Breast epithelium (tissue), 4 donors: ENCODE measurements at regions of chr6 and their contacts with region 1.

Region 1: GRCh38 chr6:97102145-97102790 is 177.7 kb downstream of the KLHL32 start:
- DNase-seq: no peak
- H3K4me3 ChIP-seq: no peak overlapping the region
- H3K27ac ChIP-seq: no peak overlapping the region
- H3K4me1 ChIP-seq: no peaks in the 10 kb centered on the region
- H3K27me3 ChIP-seq: no peaks in the 10 kb centered on the region
- CTCF ChIP-seq: no peak
- POLR2A ChIP-seq: no peak

Region 2: GRCh38 chr6:95266537-95267258 is 1835.6 kb before region 1 on chr6:
- intact Hi-C with region 1: loop called (anchors 5 kb)
- DNase-seq: no peak
- H3K4me3 ChIP-seq: no peak overlapping the region
- H3K27ac ChIP-seq: no peak overlapping the region
- H3K4me1 ChIP-seq: no peaks in the 10 kb centered on the region
- H3K27me3 ChIP-seq: no peaks in the 10 kb centered on the region
- CTCF ChIP-seq: no peak
- POLR2A ChIP-seq: no peak

Region 3: GRCh38 chr6:96276305-96276704 is 826.0 kb before region 1 on chr6:
- intact Hi-C with region 1: no loop called
- DNase-seq: no peak
- H3K4me3 ChIP-seq: no peak overlapping the region
- H3K27ac ChIP-seq: no peak overlapping the region
- H3K4me1 ChIP-seq: no peaks in the 10 kb centered on the region
- H3K27me3 ChIP-seq: no peaks in the 10 kb centered on the region
- CTCF ChIP-seq: no peak
- POLR2A ChIP-seq: no peak